Gastrocnemius medialis (tissue), 4 donors: ENCODE measurements at regions of chr15 and their contacts with region 1.

Region 1: GRCh38 chr15:101501703-101502373 is 12.3 kb upstream of the PCSK6 start:
- DNase-seq: peak in 1 of 2 donors; percentile 52
- ATAC-seq: no peak
- H3K4me3 ChIP-seq: no peak overlapping the region
- H3K27ac ChIP-seq: peak overlapping the region; percentile 56 to 95 (median 90)
- H3K4me1 ChIP-seq: peaks cover 31 to 35% of the 10 kb centered on the region in 2 donors
- H3K27me3 ChIP-seq: no peaks in the 10 kb centered on the region
- CTCF ChIP-seq: peak in 3 of 5 experiments; percentile 38 to 59 (median 56)
- POLR2A ChIP-seq: no peak

Region 2: GRCh38 chr15:101294731-101295606 is 206.9 kb before region 1 on chr15 and contains the start of gene SNRPA1:
- in situ Hi-C with region 1: no loop called
- intact Hi-C with region 1: loop called (anchors 5 kb)
- DNase-seq: peak; percentile 96 to 97
- ATAC-seq: peak; percentile 90 to 93
- H3K4me3 ChIP-seq: peak within 1 kb of the TSS; percentile 71 to 99 (median 92)
- H3K27ac ChIP-seq: peak within 1 kb of the TSS; percentile 93 to 99 (median 98)
- H3K4me1 ChIP-seq: peaks cover 30 to 37% of the 10 kb centered on the region in 2 donors
- H3K27me3 ChIP-seq: no peaks in the 10 kb centered on the region
- CTCF ChIP-seq: peak in 2 of 5 experiments; percentile 5 to 22
- POLR2A ChIP-seq: peak; percentile 82 to 92
- total RNA-seq, gene SNRPA1: 19.6 to 59.1 (median 26.2) TPM

Region 3: DNA sequence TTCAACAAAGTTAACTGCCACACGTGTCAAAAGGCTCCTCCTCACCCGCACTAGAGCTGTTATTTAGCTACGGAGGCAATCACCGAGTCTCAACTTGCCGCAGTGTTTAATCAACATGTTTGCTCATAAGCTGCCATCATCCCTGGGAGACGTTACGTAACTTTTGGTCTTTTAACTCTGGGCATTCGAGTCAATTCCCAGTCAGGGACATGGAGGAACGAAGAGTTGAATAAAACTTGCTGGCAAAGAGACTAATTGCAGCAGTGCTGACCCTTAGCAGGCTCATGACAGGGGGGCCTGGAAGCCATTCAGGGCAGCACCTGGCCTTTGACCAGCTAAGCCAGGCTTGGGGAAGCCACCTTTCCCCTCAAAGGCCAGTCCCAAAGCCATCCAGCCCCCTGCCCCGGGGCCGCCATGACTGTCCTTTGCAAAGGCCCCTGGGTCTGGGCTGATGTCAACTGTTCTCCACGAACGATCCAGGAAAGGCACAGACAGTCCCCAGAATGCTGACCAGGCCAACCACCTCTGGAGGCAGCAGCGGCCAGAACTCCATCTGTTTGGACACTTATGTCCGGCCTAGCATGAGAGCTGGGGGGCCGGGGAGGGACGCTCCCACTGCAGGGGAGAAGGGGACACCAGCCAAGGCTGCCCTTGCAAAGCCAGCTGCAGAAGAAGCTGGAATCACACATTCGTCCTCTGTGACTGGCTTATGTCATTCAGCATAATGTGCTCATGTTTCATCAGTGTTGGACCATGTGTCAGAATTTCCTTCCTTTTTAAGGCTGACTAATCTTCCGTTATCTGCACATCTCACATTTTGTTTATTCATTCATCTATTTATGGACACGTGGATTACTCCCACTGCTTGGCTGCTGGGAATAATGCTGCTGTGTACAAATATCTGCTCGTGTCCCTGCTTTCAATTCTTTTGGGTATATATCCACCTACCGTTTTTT is 56.0 kb before region 1 on chr15:
- in situ Hi-C with region 1: no loop called
- intact Hi-C with region 1: loop called (anchors 2 kb)
- DNase-seq: peak; percentile 50 to 71
- ATAC-seq: peak; percentile 86 to 93
- H3K4me3 ChIP-seq: peak overlapping the region in 1 of 4 donors; percentile 25
- H3K27ac ChIP-seq: peak overlapping the region; percentile 61 to 95 (median 74)
- H3K4me1 ChIP-seq: peaks cover 20 to 25% of the 10 kb centered on the region in 2 donors
- H3K27me3 ChIP-seq: no peaks in the 10 kb centered on the region
- CTCF ChIP-seq: no peak
- POLR2A ChIP-seq: peak in 1 of 2 donors; percentile 33

Region 4: DNA sequence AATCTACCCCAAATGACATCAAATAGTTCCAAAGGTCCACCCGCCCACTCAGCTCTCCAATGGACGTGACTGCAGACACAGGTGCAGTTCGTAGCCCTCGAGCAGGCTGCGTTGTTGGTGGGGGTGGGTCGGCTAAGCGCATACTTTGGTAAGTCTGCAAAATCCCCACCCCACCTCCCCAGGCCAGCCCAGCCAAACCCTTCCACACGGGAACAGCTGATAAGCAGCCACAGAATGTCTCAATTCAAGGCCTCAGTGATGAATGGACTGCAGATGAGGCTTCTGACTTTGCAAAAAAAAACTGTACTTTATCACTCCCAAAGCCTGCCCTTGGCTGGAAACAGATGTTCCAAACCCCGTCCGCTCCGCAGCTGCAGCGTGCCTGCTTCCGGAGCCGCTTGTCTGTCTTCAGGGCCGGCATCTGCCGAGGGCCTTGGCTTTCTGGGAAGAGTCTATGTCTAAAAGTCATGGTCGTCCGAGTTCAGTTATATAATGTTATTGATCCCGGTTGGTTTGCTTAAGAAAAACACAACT is 50.5 kb before region 1 on chr15:
- in situ Hi-C with region 1: no loop called
- intact Hi-C with region 1: loop called (anchors 1 kb)
- DNase-seq: peak in 1 of 2 donors; percentile 48
- ATAC-seq: no peak
- H3K4me3 ChIP-seq: peak overlapping the region in 2 of 4 donors; percentile 12 to 19
- H3K27ac ChIP-seq: peak overlapping the region; percentile 7 to 94 (median 48)
- H3K4me1 ChIP-seq: peaks cover 42 to 50% of the 10 kb centered on the region in 2 donors
- H3K27me3 ChIP-seq: no peaks in the 10 kb centered on the region
- CTCF ChIP-seq: no peak
- POLR2A ChIP-seq: no peak

Region 5: GRCh38 chr15:101615986-101616848 is 114.4 kb after region 1 on chr15:
- in situ Hi-C with region 1: no loop called
- intact Hi-C with region 1: loop called (anchors 2 kb)
- DNase-seq: peak in 1 of 2 donors; percentile 73
- ATAC-seq: peak; percentile 14 to 26
- H3K4me3 ChIP-seq: peak overlapping the region in 3 of 4 donors; percentile 1 to 20 (median 6)
- H3K27ac ChIP-seq: peak overlapping the region; percentile 79 to 92 (median 81)
- H3K4me1 ChIP-seq: peaks cover 84 to 95% of the 10 kb centered on the region in 2 donors
- H3K27me3 ChIP-seq: no peaks in the 10 kb centered on the region
- CTCF ChIP-seq: no peak
- POLR2A ChIP-seq: no peak

Region 6: GRCh38 chr15:101710806-101711205 is 209.0 kb after region 1 on chr15:
- in situ Hi-C with region 1: no loop called
- intact Hi-C with region 1: no loop called
- DNase-seq: no peak
- ATAC-seq: no peak
- H3K4me3 ChIP-seq: no peak overlapping the region
- H3K27ac ChIP-seq: no peak overlapping the region
- H3K4me1 ChIP-seq: no peaks in the 10 kb centered on the region
- H3K27me3 ChIP-seq: no peaks in the 10 kb centered on the region
- CTCF ChIP-seq: no peak
- POLR2A ChIP-seq: no peak